HepG2 (cell line): ENCODE measurements at regions of chr21 and their contacts with region 1.

Region 1: DNA sequence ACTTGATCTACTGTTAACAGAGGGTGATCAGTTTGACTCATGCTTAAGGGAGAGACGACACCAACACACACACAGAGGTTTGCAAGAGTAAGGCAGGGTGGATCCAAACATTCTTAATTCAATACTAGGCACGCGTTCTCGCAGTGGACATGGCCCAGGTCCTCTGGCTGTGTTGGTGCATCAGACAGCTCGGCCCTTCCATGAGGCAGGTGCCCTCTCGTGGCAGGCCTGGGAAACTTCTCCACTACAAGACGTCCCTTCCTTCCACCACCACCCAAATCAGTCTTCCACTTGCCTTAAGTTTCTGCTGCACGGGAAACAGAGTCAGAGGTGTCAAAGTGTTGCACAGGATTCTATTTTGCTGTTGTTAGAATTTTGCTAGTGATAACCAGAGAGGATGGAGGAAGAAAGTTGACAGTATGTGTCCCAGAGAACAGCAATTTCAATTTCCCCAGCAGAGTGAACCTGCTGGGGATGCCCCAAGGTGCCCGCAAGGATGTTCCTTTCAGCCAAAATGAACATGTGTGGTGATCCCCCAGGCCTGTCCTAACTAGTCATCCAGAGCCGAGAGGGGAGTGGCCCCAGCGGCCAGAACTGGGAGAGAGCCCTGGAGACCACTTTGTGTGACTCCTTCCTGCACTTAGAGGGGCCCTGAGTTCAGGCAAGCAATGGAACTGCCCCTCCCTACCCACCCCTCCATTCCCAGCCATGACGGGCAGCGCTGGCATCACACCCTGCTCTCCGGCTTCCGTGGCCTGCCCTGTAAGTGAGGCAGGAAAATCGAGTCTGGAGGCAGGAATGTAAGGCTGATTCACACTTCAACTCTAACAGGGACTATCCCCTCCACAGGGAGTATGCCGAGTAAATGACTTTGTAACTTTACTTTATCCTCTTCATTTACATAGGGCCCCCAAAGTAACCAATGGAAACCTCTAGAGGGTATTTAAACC is 34.8 kb downstream of the MX1 start:
- DNase-seq: peak; percentile 54
- ATAC-seq: peak; percentile 98
- H3K4me3 ChIP-seq: no peak overlapping the region
- H3K27ac ChIP-seq: no peak overlapping the region
- H3K4me1 ChIP-seq: peaks cover 12% of the 10 kb centered on the region
- H3K27me3 ChIP-seq: no peaks in the 10 kb centered on the region
- CTCF ChIP-seq: peak; percentile 91
- EP300 ChIP-seq: no peak
- POLR2A ChIP-seq: no peak
- RAD21 ChIP-seq: peak; percentile 58

Region 2: DNA sequence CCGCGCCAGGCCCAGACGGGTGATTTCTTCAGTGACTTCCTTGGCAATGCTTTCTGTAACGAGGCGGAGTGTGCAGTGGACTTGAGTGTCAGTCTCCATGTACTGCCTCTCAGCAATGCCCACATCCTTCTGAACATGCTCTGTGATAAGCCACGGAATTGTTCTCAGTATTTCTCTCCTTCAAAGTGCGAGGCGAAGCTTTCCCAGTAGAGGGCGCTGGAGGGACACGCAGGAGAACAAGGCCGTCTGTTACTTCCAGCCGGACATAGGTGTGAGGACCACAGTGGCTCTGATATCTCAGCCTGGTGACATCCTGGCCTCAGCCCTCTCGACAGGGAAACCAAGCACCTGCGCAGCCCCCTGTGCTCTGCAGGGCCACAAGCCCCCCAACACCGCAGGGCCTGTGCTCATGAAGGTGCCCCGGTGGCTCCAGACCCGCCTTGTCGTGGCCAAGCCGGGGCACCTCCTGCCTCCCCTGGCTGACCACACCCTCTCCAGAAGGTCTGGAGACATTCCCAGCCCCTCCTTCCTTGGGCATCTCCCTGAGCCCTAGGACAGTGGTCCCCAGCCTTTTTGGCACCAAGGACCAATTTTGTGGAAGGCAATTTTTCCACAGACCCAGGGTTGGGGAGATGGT is 338.9 kb before region 1 on chr21:
- CTCF ChIA-PET with region 1: no interaction called
- POLR2A ChIA-PET with region 1: no interaction called
- in situ Hi-C with region 1: no loop called
- intact Hi-C with region 1: loop called (anchors 2 kb)
- DNase-seq: peak; percentile 70
- ATAC-seq: peak; percentile 98
- H3K4me3 ChIP-seq: no peak overlapping the region
- H3K27ac ChIP-seq: no peak overlapping the region
- H3K4me1 ChIP-seq: no peaks in the 10 kb centered on the region
- H3K27me3 ChIP-seq: peaks cover 0 to 8% of the 10 kb centered on the region in 2 experiments; a peak in 3 of 5 replicates
- CTCF ChIP-seq: peak; percentile 88
- EP300 ChIP-seq: no peak
- POLR2A ChIP-seq: no peak
- RAD21 ChIP-seq: no peak

Region 3: DNA sequence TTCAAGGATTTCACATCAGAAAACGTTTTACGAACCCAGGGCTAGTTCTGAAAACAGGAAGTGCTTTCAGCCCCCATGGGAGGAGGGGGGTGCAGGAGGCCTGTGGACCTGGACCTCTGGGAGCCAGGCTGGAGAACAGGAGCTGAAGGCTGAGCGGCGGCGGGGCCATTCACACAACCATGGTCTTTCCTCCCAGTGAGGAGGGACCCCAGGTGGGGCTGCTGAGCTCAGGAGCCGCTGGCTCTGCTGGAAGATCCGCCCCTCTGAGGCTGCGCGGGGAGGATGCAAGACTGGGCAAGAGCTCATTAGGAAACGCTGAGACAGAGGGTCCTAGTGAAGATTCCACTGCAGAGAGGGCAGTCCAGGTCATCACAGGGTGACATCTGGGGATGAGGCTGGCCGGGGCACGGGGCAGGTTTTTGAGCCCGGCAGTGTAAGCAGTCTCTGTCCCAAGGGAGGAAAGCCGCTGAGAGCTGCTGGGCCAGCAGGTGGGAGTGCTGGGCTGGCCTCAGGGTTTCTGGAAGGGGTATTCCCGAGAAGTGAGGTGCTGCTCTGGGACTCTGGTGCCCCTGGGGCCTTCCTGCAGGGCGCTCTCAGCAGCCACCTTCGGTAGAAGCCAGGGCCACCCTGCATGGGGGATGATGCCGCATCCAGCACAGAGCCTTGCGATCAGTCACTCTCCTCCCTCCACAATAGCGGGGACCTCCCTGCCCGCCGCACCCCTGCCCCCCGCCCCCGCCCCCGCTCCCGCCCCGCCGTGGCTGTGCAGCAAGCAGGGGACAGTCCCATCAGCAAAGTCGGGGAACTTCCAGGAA is 91.5 kb before region 1 on chr21:
- CTCF ChIA-PET with region 1: no interaction called
- POLR2A ChIA-PET with region 1: no interaction called
- in situ Hi-C with region 1: no loop called
- intact Hi-C with region 1: loop called (anchors 2 kb)
- DNase-seq: peak; percentile 40
- ATAC-seq: peak; percentile 76
- H3K4me3 ChIP-seq: peak overlapping the region; percentile 57 to 73 (median 67); a peak in 5 of 6 replicates
- H3K27ac ChIP-seq: peak overlapping the region; percentile 68
- H3K4me1 ChIP-seq: peaks cover 56% of the 10 kb centered on the region
- H3K27me3 ChIP-seq: no peaks in the 10 kb centered on the region; a peak in 1 of 5 replicates
- CTCF ChIP-seq: peak; percentile 52
- EP300 ChIP-seq: no peak
- POLR2A ChIP-seq: no peak; a peak in 1 of 4 replicates
- RAD21 ChIP-seq: peak; percentile 30

Region 4: GRCh38 chr21:41419911-41420862 is 40.7 kb before region 1 on chr21:
- CTCF ChIA-PET with region 1: no interaction called
- POLR2A ChIA-PET with region 1: no interaction called
- in situ Hi-C with region 1: no loop called
- intact Hi-C with region 1: loop called (anchors 2 kb)
- DNase-seq: peak; percentile 69
- ATAC-seq: peak; percentile 85
- H3K4me3 ChIP-seq: peak overlapping the region; percentile 79 to 87 (median 82)
- H3K27ac ChIP-seq: peak overlapping the region; percentile 47
- H3K4me1 ChIP-seq: peaks cover 12% of the 10 kb centered on the region
- H3K27me3 ChIP-seq: no peaks in the 10 kb centered on the region; a peak in 1 of 5 replicates
- CTCF ChIP-seq: no peak
- EP300 ChIP-seq: no peak; a peak in 1 of 4 replicates
- POLR2A ChIP-seq: peak in 1 of 2 experiments; percentile 41; a peak in 1 of 4 replicates
- RAD21 ChIP-seq: no peak; the same call in 1 of the 2 replicates